ENCODE measurements at regions of chr9 and their contacts with region 1.

Region 1: DNA sequence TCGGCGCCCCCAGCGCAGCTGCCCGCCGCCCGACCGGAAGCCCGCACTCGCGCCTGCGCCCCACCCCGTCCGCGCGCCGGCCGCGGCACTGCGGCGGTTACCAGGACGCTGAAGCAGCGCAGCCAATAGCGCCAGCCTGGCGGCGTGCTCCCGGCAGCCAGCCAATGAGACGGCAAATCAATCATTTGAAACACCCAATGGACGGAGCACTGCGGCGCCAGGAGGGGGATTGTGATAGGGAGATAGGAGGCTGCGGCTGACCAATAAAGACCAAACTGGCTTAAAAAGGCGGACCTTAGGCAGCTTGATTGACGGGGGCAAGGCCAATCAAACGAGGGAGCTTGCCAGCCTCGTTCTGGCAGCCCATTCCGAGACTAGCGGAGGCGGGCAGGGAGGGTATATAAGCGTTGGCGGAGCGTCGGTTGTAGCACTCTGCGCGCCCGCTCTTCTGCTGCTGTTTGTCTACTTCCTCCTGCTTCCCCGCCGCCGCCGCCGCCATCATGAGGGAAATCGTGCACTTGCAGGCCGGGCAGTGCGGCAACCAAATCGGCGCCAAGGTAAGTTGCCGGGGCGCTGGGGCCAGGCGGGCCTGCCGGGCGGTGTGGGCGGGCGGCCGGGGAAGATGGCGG is at the start of gene TUBB4B:
- DNase-seq: peak; percentile 98 to 100
- H3K4me3 ChIP-seq: peak within 1 kb of the TSS; percentile 80
- H3K4me3 Mint-ChIP-seq: peak within 1 kb of the TSS; percentile 80
- H3K27ac Mint-ChIP-seq: peak within 1 kb of the TSS; percentile 95
- H3K4me1 ChIP-seq: peaks cover 28% of the 10 kb centered on the region
- H3K4me1 Mint-ChIP-seq: peaks cover 7% of the 10 kb centered on the region
- H3K27me3 ChIP-seq: no peaks in the 10 kb centered on the region
- H3K27me3 Mint-ChIP-seq: peaks cover 3% of the 10 kb centered on the region
- CTCF ChIP-seq: no peak
- total RNA-seq, gene TUBB4B: 481 and 487 TPM in 2 replicates

Region 2: DNA sequence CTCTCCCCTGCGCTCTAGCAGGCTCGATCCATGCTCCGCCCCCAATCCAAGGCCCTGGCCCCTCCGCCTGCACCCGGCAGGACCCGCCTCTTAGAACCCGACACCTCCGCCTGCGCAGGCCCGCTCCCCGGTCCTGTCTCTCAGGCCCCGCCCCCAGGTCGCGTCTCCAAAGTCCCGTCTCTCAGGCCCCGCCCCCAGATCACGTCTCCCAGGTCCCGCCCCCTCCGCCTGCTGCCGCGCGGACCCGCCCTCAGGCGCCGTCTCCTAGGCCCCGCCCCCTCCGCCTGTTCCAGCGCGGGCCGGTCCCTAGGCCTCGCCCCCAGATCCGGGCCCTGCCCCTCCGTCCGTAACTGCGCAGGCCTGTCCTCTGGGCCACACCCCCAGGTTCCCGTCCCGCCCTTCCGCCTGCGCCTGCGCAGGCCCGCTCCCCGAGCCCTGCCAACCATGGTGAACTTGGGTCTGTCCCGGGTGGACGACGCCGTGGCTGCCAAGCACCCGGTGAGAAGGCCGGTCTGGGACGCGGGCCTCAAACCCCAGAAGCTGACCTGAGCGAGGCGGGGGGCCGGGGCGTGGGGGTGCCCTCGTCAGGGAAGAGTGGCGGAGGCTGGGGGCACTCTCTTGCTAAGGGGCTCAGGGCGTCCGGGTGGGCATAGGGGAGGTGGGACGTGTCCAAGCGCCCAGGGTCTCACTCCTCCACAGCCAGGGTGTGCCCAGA is 449.9 kb before region 1 on chr9 and contains the start of gene TMEM141:
- CTCF ChIA-PET with region 1: no interaction called
- POLR2A ChIA-PET with region 1: no interaction called
- intact Hi-C with region 1: loop called (anchors 10 kb)
- DNase-seq: peak; percentile 100
- H3K4me3 ChIP-seq: peak within 1 kb of the TSS; percentile 98
- H3K4me3 Mint-ChIP-seq: peak within 1 kb of the TSS; percentile 68
- H3K27ac Mint-ChIP-seq: peak within 1 kb of the TSS; percentile 84
- H3K4me1 ChIP-seq: peaks cover 47% of the 10 kb centered on the region
- H3K4me1 Mint-ChIP-seq: peaks cover 45% of the 10 kb centered on the region
- H3K27me3 ChIP-seq: no peaks in the 10 kb centered on the region
- H3K27me3 Mint-ChIP-seq: no peaks in the 10 kb centered on the region
- CTCF ChIP-seq: no peak
- total RNA-seq, gene TMEM141: 107 and 122 TPM in 2 replicates

Region 3: GRCh38 chr9:137176302-137177182 is 64.4 kb before region 1 on chr9:
- CTCF ChIA-PET with region 1: interaction called, 13 read pairs
- POLR2A ChIA-PET with region 1: interaction called, 5 read pairs
- intact Hi-C with region 1: no loop called
- DNase-seq: peak; percentile 65 to 71
- H3K4me3 ChIP-seq: no peak overlapping the region
- H3K4me3 Mint-ChIP-seq: no peak overlapping the region
- H3K27ac Mint-ChIP-seq: no peak overlapping the region
- H3K4me1 ChIP-seq: 0 out of 2 replicates have a peak, but pooled peaks cover 3% of the 10 kb centered on the region
- H3K4me1 Mint-ChIP-seq: no peaks in the 10 kb centered on the region
- H3K27me3 ChIP-seq: no peaks in the 10 kb centered on the region
- H3K27me3 Mint-ChIP-seq: no peaks in the 10 kb centered on the region
- CTCF ChIP-seq: peak; percentile 35 to 72

Region 4: DNA sequence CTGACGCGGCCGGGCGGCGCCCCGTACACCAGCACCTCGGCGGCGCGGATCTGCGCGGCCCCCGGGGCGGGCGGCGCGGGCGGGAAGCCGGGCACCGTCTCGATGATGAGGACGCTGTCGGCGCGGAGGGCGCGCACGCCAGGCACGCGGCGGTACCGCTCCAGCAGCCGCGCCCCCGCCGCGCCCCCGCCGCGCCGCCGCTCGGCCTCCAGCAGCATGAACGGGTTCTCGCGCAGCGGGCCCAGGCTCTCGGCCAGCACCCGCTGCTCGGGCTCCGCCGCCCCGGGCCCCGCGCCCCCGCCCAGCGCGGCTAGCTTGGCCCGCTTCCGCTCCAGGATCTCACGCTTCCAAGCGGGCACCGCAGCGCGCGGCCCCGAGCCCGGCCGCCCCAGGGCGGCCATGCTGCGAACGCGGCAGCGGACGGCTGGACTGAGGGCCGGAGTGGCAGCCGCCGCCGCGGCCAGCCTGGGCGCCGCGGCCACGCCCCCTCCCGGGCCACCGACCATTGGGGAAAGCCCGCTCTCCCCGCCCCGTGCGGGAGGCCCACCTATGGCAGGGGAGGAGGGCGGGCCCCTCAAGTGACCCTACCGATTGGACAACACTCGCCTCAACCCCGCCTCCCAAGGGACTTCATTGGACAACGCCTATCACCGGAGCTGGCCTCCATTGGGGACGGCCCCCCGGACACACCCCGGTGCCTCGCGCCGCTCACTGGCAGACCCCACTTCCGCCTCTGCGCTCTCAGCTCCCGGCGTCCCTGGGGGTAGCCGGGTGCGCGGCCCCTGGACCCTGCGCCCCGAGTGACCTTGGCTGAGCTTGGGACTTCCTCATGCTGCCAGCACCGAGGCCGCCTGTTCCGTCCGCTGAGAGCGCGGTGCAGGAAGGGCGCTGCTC is 40.4 kb before region 1 on chr9 and contains the start of gene TPRN:
- CTCF ChIA-PET with region 1: interaction called, 12 read pairs
- POLR2A ChIA-PET with region 1: interaction called, 10 read pairs
- intact Hi-C with region 1: loop called (anchors 5 kb)
- DNase-seq: peak; percentile 100
- H3K4me3 ChIP-seq: peak within 1 kb of the TSS; percentile 80
- H3K4me3 Mint-ChIP-seq: peak within 1 kb of the TSS; percentile 78
- H3K27ac Mint-ChIP-seq: peak within 1 kb of the TSS; percentile 64
- H3K4me1 ChIP-seq: peaks cover 37% of the 10 kb centered on the region
- H3K4me1 Mint-ChIP-seq: peaks cover under 1% of the 10 kb centered on the region
- H3K27me3 ChIP-seq: no peaks in the 10 kb centered on the region
- H3K27me3 Mint-ChIP-seq: no peaks in the 10 kb centered on the region
- CTCF ChIP-seq: no peak
- total RNA-seq, gene TPRN: 34.2 and 37.7 TPM in 2 replicates

Region 5: DNA sequence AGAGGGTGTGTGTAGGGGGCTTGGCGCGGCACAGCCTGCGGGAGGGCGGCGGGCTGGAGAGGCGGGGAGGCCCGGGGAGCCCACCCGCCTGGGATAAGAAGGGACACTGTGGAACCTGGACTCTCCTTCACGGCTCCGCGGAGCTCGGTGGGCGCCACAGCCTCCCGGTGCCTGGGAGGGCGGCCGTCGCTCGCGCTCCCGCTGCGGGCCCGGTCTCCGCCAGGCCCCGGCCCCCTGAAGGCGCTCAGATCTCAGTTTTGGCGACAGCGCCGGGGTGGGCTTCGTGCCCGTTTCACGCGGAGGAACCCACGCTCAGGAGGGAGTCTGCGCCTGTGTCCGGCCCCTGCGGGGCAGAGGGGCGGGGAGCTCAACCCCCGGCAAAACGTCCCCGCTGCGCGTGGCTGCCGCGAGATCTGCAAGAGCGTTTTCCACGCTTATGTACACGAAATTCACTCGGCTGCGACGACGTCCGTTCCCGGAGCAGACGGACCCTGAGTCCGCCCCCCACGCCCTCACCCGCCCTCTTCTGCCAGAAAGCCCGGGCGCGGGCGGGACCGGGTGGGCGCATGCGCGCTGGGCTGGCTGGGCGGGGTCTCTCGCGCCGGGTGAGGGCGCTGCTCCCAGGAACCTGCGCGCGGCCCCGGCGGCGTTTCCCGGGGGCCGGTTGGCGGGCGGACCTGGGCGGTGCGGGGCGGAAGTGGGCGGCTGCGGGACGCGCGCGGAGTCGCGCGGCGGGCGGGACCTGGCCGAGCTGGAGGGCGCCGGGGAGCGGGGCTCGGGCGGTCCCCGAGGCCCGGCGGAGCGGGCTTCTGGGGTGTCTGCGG is 13.9 kb after region 1 on chr9 and contains the start of gene NELFB:
- CTCF ChIA-PET with region 1: interaction called, 24 read pairs
- POLR2A ChIA-PET with region 1: interaction called, 39 read pairs
- intact Hi-C with region 1: loop called (anchors 1 kb)
- DNase-seq: peak; percentile 91 to 98
- H3K4me3 ChIP-seq: peak within 1 kb of the TSS; percentile 97
- H3K4me3 Mint-ChIP-seq: peak within 1 kb of the TSS; percentile 93
- H3K27ac Mint-ChIP-seq: peak within 1 kb of the TSS; percentile 92
- H3K4me1 ChIP-seq: peaks cover 23% of the 10 kb centered on the region
- H3K4me1 Mint-ChIP-seq: peaks cover 7% of the 10 kb centered on the region
- H3K27me3 ChIP-seq: no peaks in the 10 kb centered on the region
- H3K27me3 Mint-ChIP-seq: no peaks in the 10 kb centered on the region
- CTCF ChIP-seq: no peak
- total RNA-seq, gene NELFB: 79.1 and 79.8 TPM in 2 replicates

Region 6: GRCh38 chr9:137477778-137478631 is 237.0 kb after region 1 on chr9:
- CTCF ChIA-PET with region 1: no interaction called
- POLR2A ChIA-PET with region 1: interaction called, 10 read pairs
- intact Hi-C with region 1: no loop called
- DNase-seq: peak in 1 of 2 experiments; percentile 29
- H3K4me3 ChIP-seq: no peak overlapping the region
- H3K4me3 Mint-ChIP-seq: no peak overlapping the region
- H3K27ac Mint-ChIP-seq: no peak overlapping the region
- H3K4me1 ChIP-seq: peaks cover 11% of the 10 kb centered on the region; the same call in 1 of the 2 replicates
- H3K4me1 Mint-ChIP-seq: peaks cover 7% of the 10 kb centered on the region
- H3K27me3 ChIP-seq: no peaks in the 10 kb centered on the region
- H3K27me3 Mint-ChIP-seq: no peaks in the 10 kb centered on the region
- CTCF ChIP-seq: no peak

Measured in Caco-2 (cell line).